ENCODE measurements at regions of chr14 and their contacts with region 1.

Region 1: DNA sequence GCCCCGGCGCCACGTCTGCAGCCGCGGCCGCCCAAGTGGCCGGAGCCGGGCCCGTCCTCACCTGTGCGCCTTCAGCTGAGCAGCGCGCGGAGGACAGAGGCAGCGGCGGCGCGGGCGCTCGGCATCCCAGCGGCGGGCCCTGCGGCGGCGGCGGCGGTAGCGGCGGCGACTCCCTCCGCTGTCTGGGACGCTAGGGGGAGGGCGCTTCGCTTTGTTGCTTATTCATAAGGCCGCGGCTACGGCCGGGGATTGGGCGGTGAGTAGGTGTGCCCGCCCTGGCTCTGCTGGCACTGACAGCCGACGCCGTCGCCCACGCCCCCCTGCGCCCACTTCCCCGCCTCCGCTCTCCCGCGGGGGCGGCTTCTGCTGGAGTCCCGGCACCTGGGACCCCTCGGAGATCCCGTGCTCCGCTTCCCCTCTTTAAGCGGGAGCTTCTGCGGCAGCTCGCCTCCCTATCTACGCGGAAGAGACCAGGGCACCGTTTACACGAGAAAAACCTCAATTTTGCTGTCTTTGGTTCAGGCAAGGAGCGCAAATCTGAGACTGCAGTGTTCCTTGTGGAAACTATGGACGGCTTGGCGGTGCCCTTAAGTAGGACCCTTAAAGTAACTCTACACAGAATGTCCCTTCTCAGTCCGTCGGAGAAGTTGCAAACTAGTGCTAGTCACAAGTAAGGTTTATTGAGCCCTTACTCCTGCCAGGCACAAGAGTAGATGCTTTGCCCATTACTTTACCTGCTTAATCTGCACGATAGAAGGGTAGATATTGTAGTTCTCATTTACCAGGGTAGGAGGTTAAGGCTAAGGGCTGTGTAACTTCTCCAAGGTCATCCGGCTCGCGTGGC is at the start of gene ARMH4:
- DNase-seq: peak; percentile 86 to 95
- H3K4me3 ChIP-seq: peak within 1 kb of the TSS; percentile 81 to 96 (median 86)
- H3K27ac ChIP-seq: peak within 1 kb of the TSS; percentile 39 to 78 (median 63)
- H3K4me1 ChIP-seq: peaks cover 11 to 21% (median 20%) of the 10 kb centered on the region in 4 donors
- H3K27me3 ChIP-seq: peaks cover 0 to 20% (median 12%) of the 10 kb centered on the region in 3 donors
- CTCF ChIP-seq: peak in 2 of 7 experiments; percentile 22 to 23
- EP300 ChIP-seq: no peak
- POLR2A ChIP-seq: no peak
- total RNA-seq, gene ARMH4: 1.9 to 14.3 (median 3.9) TPM in 4 of 5 donors, not detected in the other

Region 2: GRCh38 chr14:58109744-58110143 is 42.5 kb before region 1 on chr14:
- intact Hi-C with region 1: loop called (anchors 5 kb)
- DNase-seq: no peak
- H3K4me3 ChIP-seq: no peak overlapping the region
- H3K27ac ChIP-seq: no peak overlapping the region
- H3K4me1 ChIP-seq: no peaks in the 10 kb centered on the region
- H3K27me3 ChIP-seq: no peaks in the 10 kb centered on the region
- CTCF ChIP-seq: no peak
- EP300 ChIP-seq: no peak
- POLR2A ChIP-seq: no peak

Region 3: GRCh38 chr14:58280954-58281787 is 128.9 kb after region 1 on chr14:
- intact Hi-C with region 1: no loop called
- DNase-seq: peak in 1 of 2 donors; percentile 76
- H3K4me3 ChIP-seq: no peak overlapping the region
- H3K27ac ChIP-seq: peak overlapping the region in 4 of 5 donors; percentile 67 to 79 (median 74)
- H3K4me1 ChIP-seq: peaks cover 25 to 62% (median 46%) of the 10 kb centered on the region in 4 donors
- H3K27me3 ChIP-seq: no peaks in the 10 kb centered on the region
- CTCF ChIP-seq: no peak
- EP300 ChIP-seq: no peak
- POLR2A ChIP-seq: no peak